Activated CD4-positive, alpha-beta memory T cell treated with anti-CD3 and anti-CD28 coated beads, Interleukin-2, amount 10 ng/mL, durations not matched to agents 7 days and 5 days (primary cell): ENCODE measurements at regions of chr22 and their contacts with region 1.

Region 1: GRCh38 chr22:41857155-41857859 is 24.4 kb downstream of the SREBF2 start:
- DNase-seq: peak; percentile 77
- H3K4me3 Mint-ChIP-seq: no peak overlapping the region
- H3K27ac Mint-ChIP-seq: peak overlapping the region; percentile 86
- H3K4me1 Mint-ChIP-seq: peaks cover 72% of the 10 kb centered on the region
- H3K27me3 Mint-ChIP-seq: no peaks in the 10 kb centered on the region

Region 2: DNA sequence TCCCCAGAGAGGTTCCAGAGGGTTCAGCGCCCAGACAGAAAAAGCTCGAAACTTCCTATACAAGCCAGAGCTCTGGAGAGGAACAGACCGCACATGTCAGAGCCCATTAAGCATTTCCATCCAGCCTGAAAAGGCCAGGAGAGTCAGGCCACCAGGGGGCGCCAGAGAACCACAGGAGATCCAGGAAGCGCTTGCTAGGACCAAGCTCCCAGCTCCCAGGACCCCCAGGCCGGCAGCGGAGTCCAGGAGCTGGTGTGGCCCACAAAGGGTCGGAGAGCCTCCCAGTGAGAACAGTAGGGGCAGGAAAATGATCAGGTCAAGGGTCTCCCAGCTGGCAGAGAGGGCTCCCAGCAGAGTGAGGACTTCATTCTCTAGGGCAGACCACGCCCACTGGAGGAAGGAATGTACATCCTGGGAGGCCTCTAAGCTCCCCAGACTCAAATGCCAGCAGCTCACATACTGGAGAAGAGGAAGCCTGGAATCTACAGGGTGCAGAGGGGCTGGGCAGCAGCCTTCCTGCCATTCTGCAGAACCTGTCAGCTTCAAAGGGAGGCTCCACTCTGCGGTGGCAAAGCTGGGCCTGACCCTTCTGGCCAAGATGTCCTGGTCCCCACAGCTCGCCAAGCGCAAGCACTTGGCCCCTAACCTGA is 160.1 kb before region 1 on chr22:
- CTCF ChIA-PET with region 1: interaction called, 20 read pairs
- POLR2A ChIA-PET with region 1: no interaction called
- DNase-seq: peak; percentile 91
- H3K4me3 Mint-ChIP-seq: no peak overlapping the region
- H3K27ac Mint-ChIP-seq: peak overlapping the region; percentile 68
- H3K4me1 Mint-ChIP-seq: peaks cover 18% of the 10 kb centered on the region
- H3K27me3 Mint-ChIP-seq: peaks cover 4% of the 10 kb centered on the region

Region 3: GRCh38 chr22:41780746-41781505 is 76.4 kb before region 1 on chr22:
- CTCF ChIA-PET with region 1: interaction called, 9 read pairs
- POLR2A ChIA-PET with region 1: interaction called, 14 read pairs
- DNase-seq: peak; percentile 96
- H3K4me3 Mint-ChIP-seq: peak overlapping the region; percentile 85
- H3K27ac Mint-ChIP-seq: peak overlapping the region; percentile 97
- H3K4me1 Mint-ChIP-seq: peaks cover 46% of the 10 kb centered on the region
- H3K27me3 Mint-ChIP-seq: no peaks in the 10 kb centered on the region

Region 4: GRCh38 chr22:41832553-41833368 is 24.5 kb before region 1 on chr22 and contains the start of gene SREBF2:
- CTCF ChIA-PET with region 1: interaction called, 24 read pairs
- POLR2A ChIA-PET with region 1: interaction called, 48 read pairs
- DNase-seq: peak; percentile 100
- H3K4me3 Mint-ChIP-seq: peak within 1 kb of the TSS; percentile 92
- H3K27ac Mint-ChIP-seq: peak within 1 kb of the TSS; percentile 96
- H3K4me1 Mint-ChIP-seq: peaks cover 50% of the 10 kb centered on the region
- H3K27me3 Mint-ChIP-seq: no peaks in the 10 kb centered on the region
- total RNA-seq, gene SREBF2: 150 to 157 TPM

Region 5: DNA sequence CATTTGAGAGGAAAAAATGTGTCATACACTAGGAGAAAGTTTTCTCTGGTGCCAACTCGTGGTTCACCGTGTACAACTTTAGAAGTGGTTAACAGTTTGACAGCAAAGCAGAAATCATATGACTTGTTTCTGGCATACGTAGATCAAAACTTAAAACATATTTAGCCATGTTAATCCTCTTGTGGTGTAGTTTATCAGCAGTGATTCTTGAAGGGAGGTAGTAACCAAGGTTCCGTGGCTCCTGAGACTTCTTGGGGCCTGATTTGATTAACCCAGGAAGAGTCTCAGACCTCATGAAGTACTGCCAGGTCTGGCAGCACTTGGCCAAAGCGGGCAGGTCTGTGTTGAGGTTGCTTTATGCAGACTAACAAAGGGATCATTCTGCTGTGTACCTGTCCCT is 16.1 kb after region 1 on chr22:
- CTCF ChIA-PET with region 1: interaction called, 10 read pairs
- POLR2A ChIA-PET with region 1: interaction called, 12 read pairs
- DNase-seq: no peak
- H3K4me3 Mint-ChIP-seq: no peak overlapping the region
- H3K27ac Mint-ChIP-seq: peak overlapping the region; percentile 73
- H3K4me1 Mint-ChIP-seq: peaks cover 15% of the 10 kb centered on the region
- H3K27me3 Mint-ChIP-seq: no peaks in the 10 kb centered on the region